Activated CD4-positive, alpha-beta T cell treated with anti-CD3 and anti-CD28 coated beads for 36 hours (primary cell): ENCODE measurements at regions of chr1 and their contacts with region 1.

Region 1: GRCh38 chr1:39474810-39475209 is 16.6 kb upstream of the BMP8A start:
- DNase-seq: no peak
- ATAC-seq: no peak
- H3K4me3 Mint-ChIP-seq: no peak overlapping the region
- H3K27ac Mint-ChIP-seq: no peak overlapping the region
- H3K4me1 Mint-ChIP-seq: no peaks in the 10 kb centered on the region
- H3K27me3 Mint-ChIP-seq: no peaks in the 10 kb centered on the region

Region 2: GRCh38 chr1:39538588-39539465 is 64.0 kb after region 1 on chr1:
- CTCF ChIA-PET with region 1: interaction called, 3 read pairs
- POLR2A ChIA-PET with region 1: no interaction called
- intact Hi-C with region 1: loop called in 1 of 2 experiments (anchors 5 kb)
- DNase-seq: peak; percentile 67
- ATAC-seq: peak; percentile 91
- H3K4me3 Mint-ChIP-seq: no peak overlapping the region
- H3K27ac Mint-ChIP-seq: no peak overlapping the region
- H3K4me1 Mint-ChIP-seq: no peaks in the 10 kb centered on the region
- H3K27me3 Mint-ChIP-seq: no peaks in the 10 kb centered on the region

Region 3: DNA sequence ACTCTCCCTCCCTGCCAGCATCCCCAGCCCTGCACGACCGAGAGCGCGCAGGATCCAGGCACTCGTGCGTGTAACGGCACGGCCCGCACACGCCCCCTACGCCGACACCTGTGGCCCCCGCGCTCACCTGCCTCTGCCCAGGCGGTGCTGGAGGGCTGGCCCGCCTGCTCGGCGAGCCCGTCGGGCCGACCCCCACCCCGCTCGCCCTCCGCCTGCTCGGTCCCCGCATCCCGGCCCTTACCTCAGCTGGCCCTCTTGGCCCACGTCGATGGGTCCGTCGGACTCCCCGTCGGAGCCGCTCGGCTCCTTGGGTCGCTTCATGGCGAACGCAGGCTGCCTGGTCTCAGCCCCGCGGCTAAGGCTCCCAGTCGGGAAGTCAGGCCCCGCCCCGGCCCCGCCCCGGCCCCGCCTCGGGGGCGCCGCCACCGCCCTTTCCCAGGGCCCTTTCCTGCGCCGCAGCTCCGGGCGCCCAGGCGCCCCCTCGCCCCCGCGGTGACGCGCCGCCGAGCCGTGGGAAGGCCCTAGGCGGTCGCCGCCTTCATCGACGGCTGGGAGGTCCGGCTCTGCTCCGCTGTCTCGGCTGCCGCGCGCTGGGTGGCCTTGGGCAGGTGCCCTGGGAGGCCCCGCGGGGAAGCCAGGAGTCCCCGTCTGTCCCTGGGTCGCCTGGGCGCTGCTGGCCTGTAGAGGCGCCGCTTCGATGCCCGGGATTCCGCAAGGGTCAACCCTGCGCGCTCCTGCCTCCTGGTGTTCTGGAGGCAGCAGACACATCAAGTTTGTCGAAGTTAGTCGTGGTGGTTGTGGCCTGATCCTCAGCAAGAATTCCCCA is 164.7 kb after region 1 on chr1 and contains the start of gene HEYL:
- CTCF ChIA-PET with region 1: no interaction called
- POLR2A ChIA-PET with region 1: no interaction called
- intact Hi-C with region 1: no loop called
- DNase-seq: peak; percentile 83
- ATAC-seq: peak; percentile 93
- H3K4me3 Mint-ChIP-seq: peak within 1 kb of the TSS; percentile 38
- H3K27ac Mint-ChIP-seq: no peak within 1 kb of the TSS
- H3K4me1 Mint-ChIP-seq: peaks cover 3% of the 10 kb centered on the region
- H3K27me3 Mint-ChIP-seq: peaks cover 28% of the 10 kb centered on the region
- total RNA-seq, gene HEYL: 0.19 to 0.23 TPM